Activated CD4-positive, alpha-beta T cell treated with anti-CD3 and anti-CD28 coated beads, Interleukin-2, amount 10 ng/mL, durations not matched to agents 24 days and 14 days (primary cell): ENCODE measurements at regions of chr1 and their contacts with region 1.

Region 1: GRCh38 chr1:8941906-8942305 is 3.8 kb upstream of the CA6 start:
- DNase-seq: peak; percentile 58
- H3K4me3 Mint-ChIP-seq: no peak overlapping the region
- H3K27ac Mint-ChIP-seq: peak overlapping the region; percentile 79
- H3K4me1 Mint-ChIP-seq: peaks cover 82% of the 10 kb centered on the region
- H3K27me3 Mint-ChIP-seq: no peaks in the 10 kb centered on the region

Region 2: DNA sequence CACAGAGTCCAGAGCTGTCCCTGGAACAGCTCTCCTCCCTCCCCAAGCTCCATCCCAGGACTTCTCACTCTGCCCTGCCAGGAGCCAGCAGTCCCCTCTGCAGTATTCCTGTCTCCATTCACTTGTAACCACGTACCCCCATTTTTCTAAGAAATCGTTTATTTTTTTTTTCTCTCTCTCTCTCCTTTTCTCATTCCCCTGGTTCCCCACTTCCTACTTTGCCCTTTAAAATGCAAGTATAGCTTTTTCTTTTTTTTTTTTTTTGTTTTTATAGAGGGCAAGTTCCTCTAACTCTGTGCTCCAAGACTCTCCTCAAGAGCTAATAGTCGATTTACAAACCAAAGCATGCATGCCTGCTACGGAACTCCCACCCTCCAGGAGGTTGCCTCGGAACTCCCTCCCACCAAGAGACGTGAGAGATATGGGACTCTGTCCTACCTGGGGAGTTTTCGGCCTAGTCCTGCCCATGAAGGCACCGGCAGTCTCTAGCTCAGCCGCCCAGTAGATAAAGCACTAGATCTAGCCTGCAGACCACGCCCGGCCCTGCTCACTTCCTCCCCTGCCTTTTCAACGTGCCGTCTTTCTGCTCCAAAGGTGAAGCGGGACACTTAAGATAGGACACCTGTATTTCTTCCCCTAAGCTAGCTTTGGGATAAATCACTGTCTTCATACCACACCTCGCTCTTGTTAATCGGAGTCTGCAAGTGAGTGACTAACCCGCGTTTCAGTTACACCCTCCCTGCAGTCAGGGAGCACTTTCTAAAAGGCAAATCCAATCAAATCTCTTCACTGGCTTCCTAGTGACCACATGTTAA is 1029.0 kb before region 1 on chr1:
- intact Hi-C with region 1: no loop called
- DNase-seq: no peak
- H3K4me3 Mint-ChIP-seq: no peak overlapping the region
- H3K27ac Mint-ChIP-seq: no peak overlapping the region
- H3K4me1 Mint-ChIP-seq: peaks cover 15% of the 10 kb centered on the region
- H3K27me3 Mint-ChIP-seq: no peaks in the 10 kb centered on the region

Region 3: DNA sequence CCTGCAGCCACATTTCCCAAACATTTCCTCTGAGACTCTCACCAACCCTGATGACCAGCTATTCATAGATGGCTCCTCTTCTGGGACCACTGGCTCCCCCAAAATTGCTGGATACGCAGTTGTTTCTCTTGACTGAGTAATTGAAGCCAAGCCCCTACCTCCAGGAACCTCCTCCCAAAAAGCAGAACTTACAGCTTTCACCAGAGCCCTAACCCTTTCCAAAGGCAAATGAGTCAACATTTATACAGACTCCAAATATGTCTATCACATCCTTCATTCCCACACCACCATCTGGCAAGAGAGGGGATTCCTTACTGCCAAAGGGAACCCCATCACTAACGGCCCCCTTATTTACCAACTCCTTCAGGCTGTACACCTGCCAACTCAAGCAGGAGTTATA is 16.5 kb before region 1 on chr1:
- intact Hi-C with region 1: loop called (anchors 2 kb)
- DNase-seq: no peak
- H3K4me3 Mint-ChIP-seq: no peak overlapping the region
- H3K27ac Mint-ChIP-seq: no peak overlapping the region
- H3K4me1 Mint-ChIP-seq: peaks cover 21% of the 10 kb centered on the region
- H3K27me3 Mint-ChIP-seq: no peaks in the 10 kb centered on the region

Region 4: DNA sequence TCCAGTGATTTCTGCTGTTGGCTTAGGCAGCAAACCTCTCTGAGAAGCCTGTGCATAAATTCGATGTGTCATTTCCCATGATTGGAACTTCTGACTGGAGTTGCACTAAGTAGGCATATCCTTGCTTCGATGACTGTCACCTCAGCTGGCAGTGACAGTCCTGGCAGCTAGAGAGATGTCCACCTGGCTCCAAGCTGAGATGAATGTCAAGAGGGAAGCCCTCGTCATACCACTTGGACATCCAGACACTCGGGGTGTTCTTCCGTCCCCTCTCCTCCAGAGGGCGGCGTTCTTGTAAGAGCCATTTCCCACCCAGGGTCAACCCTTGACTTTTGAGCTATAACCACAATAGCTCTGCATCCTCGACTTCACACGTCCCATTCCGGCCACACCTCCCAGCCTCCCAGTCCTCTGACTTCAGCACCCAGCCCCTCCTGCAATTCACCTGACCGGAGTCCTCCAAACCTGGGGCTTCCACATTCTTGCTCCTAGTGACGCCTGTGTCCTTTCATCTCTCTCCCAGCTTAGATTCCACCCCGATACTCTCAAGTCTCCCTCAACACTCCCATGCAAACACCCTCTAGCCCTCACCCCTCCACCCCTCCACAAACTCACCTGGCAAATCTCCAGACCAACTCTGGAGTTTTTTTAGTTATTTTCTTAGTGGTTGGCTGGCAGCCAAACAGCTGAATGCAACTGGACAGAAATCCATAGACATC is 21.1 kb after region 1 on chr1:
- intact Hi-C with region 1: loop called (anchors 1 kb)
- DNase-seq: peak; percentile 83
- H3K4me3 Mint-ChIP-seq: peak overlapping the region; percentile 71
- H3K27ac Mint-ChIP-seq: peak overlapping the region; percentile 91
- H3K4me1 Mint-ChIP-seq: peaks cover 68% of the 10 kb centered on the region
- H3K27me3 Mint-ChIP-seq: no peaks in the 10 kb centered on the region

Region 5: DNA sequence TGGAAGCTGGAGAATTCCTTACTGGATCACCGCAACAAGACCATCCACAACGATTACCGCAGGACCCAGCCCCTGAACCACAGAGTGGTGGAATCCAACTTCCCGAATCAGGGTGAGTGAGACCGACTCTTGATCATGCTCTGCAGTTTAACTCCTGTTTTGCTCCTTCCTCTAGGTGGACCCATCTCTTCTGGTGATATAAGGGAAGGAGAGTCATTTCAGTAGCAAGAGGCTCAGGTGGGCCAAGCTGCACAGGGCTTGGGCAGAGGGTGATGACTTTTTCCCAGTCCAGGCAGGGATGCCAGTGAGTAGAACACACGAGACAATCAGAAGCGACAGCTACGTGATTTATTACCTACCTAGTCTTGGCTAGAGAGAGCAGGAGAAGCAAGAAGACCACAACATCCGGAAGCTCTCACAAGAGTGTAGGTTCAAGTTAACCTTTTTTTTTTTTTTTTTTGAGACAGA is 29.0 kb after region 1 on chr1:
- intact Hi-C with region 1: loop called (anchors 1 kb)
- DNase-seq: peak; percentile 88
- H3K4me3 Mint-ChIP-seq: peak overlapping the region; percentile 91
- H3K27ac Mint-ChIP-seq: peak overlapping the region; percentile 99
- H3K4me1 Mint-ChIP-seq: peaks cover 51% of the 10 kb centered on the region
- H3K27me3 Mint-ChIP-seq: no peaks in the 10 kb centered on the region

Region 6: DNA sequence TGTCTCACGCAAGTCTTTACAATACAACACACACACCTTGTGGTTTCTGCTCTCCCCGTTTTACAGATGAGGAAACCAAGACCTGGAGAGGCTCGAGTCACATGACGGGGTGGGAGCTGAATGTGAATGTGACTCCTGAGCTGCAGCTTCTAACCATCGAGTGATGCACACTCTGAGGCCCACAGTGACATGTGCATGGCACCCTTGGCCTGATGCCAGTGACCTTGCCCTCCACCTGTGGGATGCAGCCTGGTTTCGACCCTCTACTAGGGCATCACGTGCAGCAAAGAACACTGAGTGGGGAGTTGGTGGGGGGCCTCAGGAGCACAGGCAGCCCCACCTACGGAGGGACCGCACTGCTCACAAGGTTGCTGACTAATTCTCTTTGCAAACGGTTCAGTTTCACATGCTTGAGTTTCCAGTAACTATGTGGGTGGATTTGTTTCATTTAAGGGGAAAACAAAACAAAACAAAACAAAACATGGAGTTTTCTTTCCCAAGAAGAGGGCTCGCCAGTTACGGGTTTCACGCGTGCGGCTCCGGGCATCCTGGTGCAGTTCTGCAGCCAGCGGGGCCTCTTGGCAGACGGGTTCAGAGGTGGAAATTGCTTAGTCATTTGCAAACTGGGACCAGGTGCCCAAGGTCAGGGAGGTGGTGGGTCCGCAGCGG is 373.6 kb after region 1 on chr1:
- intact Hi-C with region 1: no loop called
- DNase-seq: peak; percentile 85
- H3K4me3 Mint-ChIP-seq: peak overlapping the region; percentile 81
- H3K27ac Mint-ChIP-seq: peak overlapping the region; percentile 98
- H3K4me1 Mint-ChIP-seq: peaks cover 49% of the 10 kb centered on the region
- H3K27me3 Mint-ChIP-seq: no peaks in the 10 kb centered on the region